ENCODE measurements at regions of chr18 and their contacts with region 1.

Region 1: DNA sequence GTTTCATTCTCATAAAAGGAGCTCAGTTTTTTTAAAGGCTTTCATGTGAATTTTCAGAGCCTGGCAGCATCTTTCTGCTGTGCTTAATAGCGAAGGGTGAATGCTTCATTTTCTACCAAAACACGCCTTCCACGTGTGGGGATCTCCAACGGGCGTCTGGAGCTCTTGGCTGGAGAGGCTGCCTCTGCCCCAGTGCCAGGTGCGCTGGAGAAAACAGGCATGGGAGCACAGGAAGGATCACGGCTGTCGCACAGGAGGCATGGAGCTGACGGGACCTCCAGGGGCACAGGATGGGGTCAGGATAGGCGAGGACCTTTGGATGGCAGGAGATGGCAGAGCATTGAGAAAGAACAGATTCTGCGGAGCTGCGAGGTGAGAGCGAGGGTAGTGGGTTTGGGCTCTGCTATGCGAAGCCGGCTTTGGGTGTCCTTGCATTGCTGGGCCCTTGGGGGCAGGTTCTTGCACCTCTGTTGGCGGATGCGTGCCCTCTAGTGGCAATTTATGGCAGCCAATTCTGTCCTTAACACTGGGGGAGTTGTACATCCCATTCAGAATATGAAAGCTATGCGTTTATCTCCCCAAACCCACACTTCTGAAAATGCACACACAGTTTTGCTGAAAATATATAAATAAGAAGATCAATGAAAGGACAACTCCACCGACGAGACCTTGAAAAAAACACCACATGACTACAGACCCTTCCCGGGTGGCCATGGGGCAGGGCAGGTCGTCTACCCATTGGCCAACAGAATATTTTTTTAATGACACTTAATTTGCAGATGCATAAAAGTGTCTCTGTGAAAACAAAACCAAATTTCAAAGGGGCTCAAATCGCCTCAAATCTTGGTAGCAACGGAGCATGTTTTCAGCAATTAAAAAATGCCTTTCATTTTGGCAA is 90.4 kb upstream of the SLC35G4 start:
- DNase-seq: peak; percentile 39
- H3K4me3 ChIP-seq: no peak overlapping the region
- H3K27ac ChIP-seq: no peak overlapping the region
- H3K4me1 ChIP-seq: peaks cover 17% of the 10 kb centered on the region
- H3K27me3 ChIP-seq: no peaks in the 10 kb centered on the region
- CTCF ChIP-seq: peak; percentile 72 to 81
- POLR2A ChIP-seq: no peak

Region 2: DNA sequence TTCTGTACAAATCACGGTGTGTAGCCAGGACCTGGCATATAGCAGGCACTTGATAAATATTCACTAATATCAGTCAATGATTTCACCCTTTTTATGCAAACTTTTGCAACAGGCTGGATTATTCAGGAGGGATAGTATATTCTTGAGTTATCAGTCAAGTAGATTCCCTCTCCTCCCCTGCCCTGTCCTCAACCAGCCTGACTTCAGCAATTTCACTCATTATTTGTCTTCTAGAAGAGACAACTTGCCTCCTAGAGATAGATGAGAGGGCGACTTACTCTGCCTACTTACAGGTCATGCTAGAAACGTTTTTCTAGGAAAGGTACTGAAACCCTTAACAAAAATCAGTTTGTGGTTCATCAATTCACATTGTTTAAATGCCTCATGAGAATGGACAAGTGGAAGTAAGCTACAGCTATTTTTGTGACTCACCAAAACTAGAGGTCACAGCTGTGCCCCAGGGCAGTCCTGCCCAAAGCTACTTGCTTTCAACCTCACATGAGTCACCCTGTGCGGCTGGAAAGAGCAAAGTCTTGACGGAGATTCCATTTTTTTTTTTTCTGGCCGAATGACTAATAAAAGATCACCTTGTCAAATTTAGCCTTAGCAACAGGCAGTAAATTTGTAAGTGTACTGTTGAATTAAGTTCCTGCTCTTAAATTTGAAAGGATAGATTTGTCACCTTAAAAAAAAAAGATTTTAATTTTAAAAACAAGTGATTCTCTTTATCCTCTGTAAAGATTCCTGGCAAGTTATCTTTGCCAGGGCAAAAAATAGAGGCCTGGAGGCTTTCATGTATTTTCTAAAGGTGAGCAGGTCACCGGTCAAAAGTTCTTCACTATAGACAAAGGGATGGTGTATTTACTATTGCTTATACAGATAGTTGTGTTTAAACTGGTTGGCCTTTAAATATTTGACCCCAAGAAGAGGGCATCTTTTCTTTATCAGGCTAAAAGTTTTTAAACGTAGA is 18.6 kb before region 1 on chr18:
- CTCF ChIA-PET with region 1: interaction called, 28 read pairs
- POLR2A ChIA-PET with region 1: no interaction called
- dilution Hi-C with region 1: no loop called
- intact Hi-C with region 1: loop called (anchors 1 kb)
- DNase-seq: peak; percentile 82
- H3K4me3 ChIP-seq: no peak overlapping the region
- H3K27ac ChIP-seq: peak overlapping the region; percentile 83
- H3K4me1 ChIP-seq: peaks cover 27% of the 10 kb centered on the region
- H3K27me3 ChIP-seq: no peaks in the 10 kb centered on the region
- CTCF ChIP-seq: no peak
- POLR2A ChIP-seq: no peak

Region 3: DNA sequence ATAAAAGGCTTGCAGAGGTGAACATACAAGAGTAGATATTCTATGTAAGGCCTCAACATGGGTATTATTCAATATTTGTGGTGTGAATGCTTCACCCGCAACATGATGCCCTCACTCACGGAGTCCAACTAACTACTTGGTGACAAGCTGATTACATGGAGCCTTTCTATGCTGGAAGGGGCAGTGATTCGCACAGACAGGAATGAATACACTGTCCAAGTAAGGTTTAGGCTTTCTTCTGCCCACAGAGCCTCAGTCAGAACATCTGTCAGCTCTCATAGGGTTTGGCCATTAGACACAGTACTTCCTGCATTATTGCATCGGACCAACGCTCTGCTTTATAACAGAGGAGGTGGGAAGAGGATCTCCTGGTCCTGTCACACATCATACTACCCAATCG is 10.0 kb after region 1 on chr18:
- CTCF ChIA-PET with region 1: interaction called, 18 read pairs
- POLR2A ChIA-PET with region 1: no interaction called
- dilution Hi-C with region 1: no loop called
- intact Hi-C with region 1: no loop called
- DNase-seq: no peak
- H3K4me3 ChIP-seq: no peak overlapping the region
- H3K27ac ChIP-seq: no peak overlapping the region
- H3K4me1 ChIP-seq: peaks cover 10% of the 10 kb centered on the region
- H3K27me3 ChIP-seq: no peaks in the 10 kb centered on the region
- CTCF ChIP-seq: no peak
- POLR2A ChIP-seq: no peak

Region 4: DNA sequence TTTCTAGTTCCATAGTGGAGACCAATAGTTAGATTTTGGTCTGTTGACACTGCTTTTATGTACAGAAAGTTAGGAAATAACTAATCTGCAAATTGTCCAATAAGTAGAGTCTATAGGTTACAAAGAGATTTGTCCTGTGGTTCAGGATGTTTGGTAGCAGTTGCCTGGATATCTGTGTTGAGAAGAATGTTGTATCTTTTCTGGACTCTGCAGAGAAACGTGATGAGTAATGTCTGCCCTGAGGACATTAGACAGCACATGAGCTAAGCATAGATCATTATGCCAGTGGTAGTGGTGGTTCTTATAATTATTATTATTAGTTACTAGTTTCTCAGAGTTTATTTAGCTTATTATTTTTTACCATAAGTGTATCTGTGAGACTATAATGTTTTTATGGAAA is 640.4 kb after region 1 on chr18:
- CTCF ChIA-PET with region 1: no interaction called
- POLR2A ChIA-PET with region 1: no interaction called
- dilution Hi-C with region 1: no loop called
- intact Hi-C with region 1: no loop called
- DNase-seq: no peak
- H3K4me3 ChIP-seq: no peak overlapping the region
- H3K27ac ChIP-seq: no peak overlapping the region
- H3K4me1 ChIP-seq: no peaks in the 10 kb centered on the region
- H3K27me3 ChIP-seq: peaks cover 2 to 14% of the 10 kb centered on the region in 2 experiments
- CTCF ChIP-seq: no peak
- POLR2A ChIP-seq: no peak

Measured in endothelial cell of umbilical vein (primary cell).